Posterior cingulate gyrus (tissue), 11 donors: ENCODE measurements at regions of chr11 and their contacts with region 1.

Region 1: GRCh38 chr11:47786373-47786772 is 19.2 kb upstream of the FNBP4 start:
- DNase-seq: peak in 3 of 10 donors; percentile 17 to 22 (median 21)

Region 2: GRCh38 chr11:47731475-47731874 is 54.9 kb before region 1 on chr11:
- intact Hi-C with region 1: loop called (anchors 10 kb)
- DNase-seq: no peak

Region 3: GRCh38 chr11:47750725-47751124 is 35.6 kb before region 1 on chr11:
- intact Hi-C with region 1: no loop called
- DNase-seq: no peak

Region 4: DNA sequence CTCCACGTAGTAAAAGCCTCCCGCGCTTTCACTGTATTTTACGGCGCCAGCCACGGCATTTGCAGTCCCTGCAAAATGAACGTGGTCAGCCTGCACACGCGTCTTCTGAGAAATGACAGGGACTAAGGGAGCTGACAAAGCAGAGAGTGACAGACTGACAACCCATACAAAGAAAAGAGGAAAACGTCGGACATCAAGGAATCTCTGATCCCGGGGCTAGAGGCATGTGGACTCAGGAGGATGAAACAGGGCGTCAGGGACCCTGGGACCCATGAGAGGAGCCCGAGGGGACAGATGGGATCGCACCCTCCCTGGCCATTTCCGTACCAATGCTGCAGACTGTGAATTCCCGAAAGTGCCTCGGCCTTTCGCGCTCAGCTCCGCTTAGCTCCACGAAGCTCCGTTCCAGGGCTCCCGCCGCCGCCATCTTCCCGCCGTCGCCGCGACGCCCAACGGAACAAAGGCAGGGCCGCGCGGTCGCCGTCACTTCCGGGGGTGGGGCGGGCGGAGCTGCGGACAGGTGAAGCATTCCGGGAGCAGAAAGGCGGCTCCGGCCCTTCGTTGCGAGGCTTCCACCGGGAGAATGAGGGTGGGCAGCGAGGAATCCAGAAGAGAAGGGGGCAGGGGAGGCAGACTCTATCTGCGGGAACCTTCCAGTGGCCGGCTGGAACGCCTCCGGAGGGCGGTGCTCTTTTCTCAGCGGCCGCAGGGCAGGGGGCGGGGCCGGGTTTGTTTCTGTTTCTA is 61.7 kb after region 1 on chr11 and contains the start of gene NUP160:
- intact Hi-C with region 1: loop called (anchors 10 kb)
- DNase-seq: peak; percentile 80 to 98 (median 88)